Mammary epithelial cell (primary cell): ENCODE measurements at regions of chr19 and their contacts with region 1.

Region 1: DNA sequence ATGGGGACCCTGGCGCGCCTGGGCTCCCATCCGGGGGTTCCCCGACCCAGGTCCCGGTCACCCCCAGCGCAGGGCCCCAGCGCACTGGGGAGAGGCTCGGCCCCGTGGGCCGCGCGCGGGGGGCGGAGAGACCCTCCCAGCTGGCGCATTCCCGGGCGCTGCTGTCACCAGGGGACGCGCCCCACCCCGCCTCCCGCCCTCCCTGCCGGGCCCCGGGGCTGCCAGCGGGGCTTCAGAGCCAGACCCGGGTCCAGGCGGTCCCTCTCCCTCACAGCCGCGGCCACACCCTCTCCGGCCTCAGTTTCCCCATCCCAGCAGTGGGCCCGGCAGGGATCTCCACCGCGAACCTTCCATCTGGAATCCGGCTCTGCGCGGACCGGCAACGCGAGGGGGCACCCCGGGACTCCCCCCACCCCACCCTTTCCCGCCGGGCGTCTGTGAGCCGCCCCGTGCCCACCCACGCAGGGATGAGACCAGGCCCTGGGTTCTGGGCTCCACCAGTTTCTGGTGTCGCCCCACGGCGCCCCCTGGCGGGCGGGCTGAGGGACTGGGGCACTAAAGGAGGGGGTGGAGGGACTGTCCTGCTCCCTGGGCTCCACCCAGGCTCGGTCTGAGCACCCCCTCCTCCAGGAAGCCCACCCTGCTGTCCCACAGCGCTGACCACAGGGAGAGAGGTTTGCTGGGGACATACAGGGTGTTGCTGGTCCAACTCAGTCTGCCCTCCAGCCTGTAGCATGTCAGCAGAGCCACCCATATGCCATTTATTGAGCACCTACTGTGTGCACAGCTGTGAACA is 878 bp upstream of the ADAMTSL5 start:
- DNase-seq: peak; percentile 42
- H3K4me3 ChIP-seq: peak overlapping the region; percentile 52 to 77 (median 66)
- H3K27ac ChIP-seq: peak overlapping the region; percentile 10
- H3K4me1 ChIP-seq: peaks cover 9% of the 10 kb centered on the region
- H3K27me3 ChIP-seq: no peaks in the 10 kb centered on the region
- CTCF ChIP-seq: peak; percentile 56 to 92

Region 2: GRCh38 chr19:1465191-1466016 is 48.3 kb before region 1 on chr19:
- CTCF ChIA-PET with region 1: no interaction called
- dilution Hi-C with region 1: no loop called
- in situ Hi-C with region 1: no loop called
- intact Hi-C with region 1: loop called (anchors 5 kb)
- DNase-seq: peak; percentile 52
- H3K4me3 ChIP-seq: peak overlapping the region in 2 of 3 experiments; percentile 12 to 30
- H3K27ac ChIP-seq: no peak overlapping the region
- H3K4me1 ChIP-seq: peaks cover 51% of the 10 kb centered on the region
- H3K27me3 ChIP-seq: peaks cover 25% of the 10 kb centered on the region
- CTCF ChIP-seq: peak; percentile 38 to 66